HEK293T (cell line): ENCODE measurements at regions of chr1 and their contacts with region 1.

Region 1: GRCh38 chr1:224922404-224923164 is 6.9 kb upstream of the DNAH14 start:
- DNase-seq: peak; percentile 80

Region 2: GRCh38 chr1:224513787-224514209 is 408.8 kb before region 1 on chr1:
- CTCF ChIA-PET with region 1: interaction called, 18 read pairs
- POLR2A ChIA-PET with region 1: no interaction called
- DNase-seq: peak; percentile 95

Region 3: DNA sequence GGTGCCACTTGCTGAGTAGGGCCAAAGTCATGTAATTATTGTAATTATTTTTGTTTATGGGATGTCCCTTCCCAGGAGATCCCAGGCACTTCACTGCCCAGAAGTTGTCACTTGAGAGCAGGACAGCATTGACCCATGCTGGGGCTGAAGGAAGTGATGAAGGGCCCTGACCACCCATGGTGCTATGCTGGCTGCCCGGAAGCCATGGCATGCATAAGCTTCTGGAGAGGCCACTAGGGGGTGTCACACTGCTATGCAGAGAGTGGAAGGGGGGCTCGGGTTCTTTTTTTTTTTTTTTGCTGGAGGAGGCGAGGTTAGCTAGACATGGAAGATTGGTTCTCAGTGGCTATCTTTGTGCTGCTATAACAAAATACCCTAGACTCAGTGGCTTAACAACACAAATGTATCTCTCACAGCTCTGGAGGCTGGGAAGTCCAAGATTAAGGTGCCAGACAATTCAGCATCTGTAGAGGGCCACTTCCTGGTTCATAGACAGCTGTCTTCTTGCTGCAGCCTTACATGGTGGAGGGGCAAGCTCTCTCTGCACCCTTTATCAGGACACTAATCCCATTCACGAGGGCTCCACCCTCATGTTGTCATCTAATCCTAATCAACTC is 221.6 kb before region 1 on chr1:
- CTCF ChIA-PET with region 1: interaction called, 12 read pairs
- POLR2A ChIA-PET with region 1: no interaction called
- DNase-seq: peak; percentile 82

Region 4: DNA sequence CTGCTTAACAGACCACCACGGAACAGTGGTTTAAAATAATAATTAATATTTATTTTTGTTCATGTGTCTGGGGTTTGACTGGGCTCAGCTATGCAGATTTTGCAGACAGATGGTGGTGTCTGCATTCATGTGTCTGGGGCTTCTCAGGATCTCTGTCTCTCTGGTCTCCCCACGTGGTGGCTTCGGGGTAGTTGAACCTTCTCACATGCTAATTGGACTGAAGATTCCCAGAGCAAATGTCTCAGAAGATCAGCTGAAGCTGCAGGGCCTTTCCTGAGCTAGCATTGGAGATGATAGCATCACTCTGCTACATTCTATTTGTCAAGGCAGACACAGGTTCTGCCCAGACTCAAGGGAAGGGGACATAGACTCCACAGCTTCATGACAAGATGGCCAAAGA is 102.2 kb before region 1 on chr1:
- CTCF ChIA-PET with region 1: no interaction called
- POLR2A ChIA-PET with region 1: no interaction called
- DNase-seq: no peak

Region 5: DNA sequence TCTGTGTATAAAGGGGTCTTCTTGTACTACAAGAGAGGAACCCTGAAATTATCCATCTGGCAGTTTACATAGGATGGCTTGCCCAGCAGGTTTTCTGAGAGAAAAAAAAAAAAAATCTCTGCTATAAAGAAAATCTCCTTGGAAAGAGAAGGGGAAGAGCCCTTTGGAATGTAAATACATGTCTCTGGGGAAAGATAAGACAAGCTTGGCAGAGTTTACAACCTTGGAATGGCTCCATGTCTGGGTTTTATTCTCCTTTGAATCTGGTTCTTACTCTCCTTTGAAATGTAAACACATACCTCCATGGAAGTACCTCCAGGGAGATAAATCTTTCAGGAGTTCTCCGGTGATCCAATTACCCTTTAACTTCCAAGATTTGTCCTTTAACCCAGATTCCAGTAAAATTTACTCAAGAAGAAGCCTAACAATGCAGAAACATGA is 38.2 kb before region 1 on chr1:
- CTCF ChIA-PET with region 1: no interaction called
- POLR2A ChIA-PET with region 1: no interaction called
- DNase-seq: no peak

Region 6: DNA sequence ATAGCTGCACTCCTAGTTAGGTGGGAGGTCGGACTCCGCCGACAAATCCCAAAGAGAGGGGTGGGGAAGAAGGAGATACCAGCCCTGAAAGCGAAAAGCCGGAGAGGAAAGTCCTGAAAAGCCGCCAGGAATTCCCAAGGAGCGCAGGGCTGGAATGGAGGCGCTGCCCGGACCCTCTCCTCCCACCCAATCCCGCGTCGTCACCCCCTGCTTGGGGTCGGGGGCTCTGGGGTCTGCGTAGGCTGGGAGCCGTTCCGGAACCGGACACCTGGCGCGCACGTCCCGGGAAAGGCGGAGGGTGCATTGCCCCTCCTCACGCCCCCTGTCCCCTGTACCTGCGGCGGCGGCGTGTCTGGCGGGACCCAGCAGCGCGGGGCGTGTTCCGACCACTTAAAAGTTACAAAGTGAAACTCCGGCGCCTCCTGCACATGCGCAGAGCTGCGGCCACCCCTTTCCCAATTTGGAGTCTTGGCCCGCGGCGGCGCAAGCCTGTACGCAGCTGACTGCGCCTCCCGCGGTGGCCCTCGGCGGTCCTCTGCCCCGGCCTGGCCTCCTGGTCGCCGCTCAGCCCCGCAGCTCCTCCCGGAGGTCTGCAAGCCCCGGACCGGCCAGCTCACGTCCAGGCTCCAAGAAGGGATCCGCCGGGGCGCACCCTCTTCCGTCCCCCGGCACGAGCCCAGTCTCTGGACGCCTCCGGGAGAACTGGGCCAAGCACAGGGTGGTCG is 959.5 kb after region 1 on chr1 and contains the start of gene TMEM63A:
- CTCF ChIA-PET with region 1: no interaction called
- POLR2A ChIA-PET with region 1: no interaction called
- DNase-seq: peak; percentile 98